Activated CD4-positive, alpha-beta memory T cell treated with anti-CD3 and anti-CD28 coated beads for 36 hours (primary cell): ENCODE measurements at regions of chr2 and their contacts with region 1.

Region 1: DNA sequence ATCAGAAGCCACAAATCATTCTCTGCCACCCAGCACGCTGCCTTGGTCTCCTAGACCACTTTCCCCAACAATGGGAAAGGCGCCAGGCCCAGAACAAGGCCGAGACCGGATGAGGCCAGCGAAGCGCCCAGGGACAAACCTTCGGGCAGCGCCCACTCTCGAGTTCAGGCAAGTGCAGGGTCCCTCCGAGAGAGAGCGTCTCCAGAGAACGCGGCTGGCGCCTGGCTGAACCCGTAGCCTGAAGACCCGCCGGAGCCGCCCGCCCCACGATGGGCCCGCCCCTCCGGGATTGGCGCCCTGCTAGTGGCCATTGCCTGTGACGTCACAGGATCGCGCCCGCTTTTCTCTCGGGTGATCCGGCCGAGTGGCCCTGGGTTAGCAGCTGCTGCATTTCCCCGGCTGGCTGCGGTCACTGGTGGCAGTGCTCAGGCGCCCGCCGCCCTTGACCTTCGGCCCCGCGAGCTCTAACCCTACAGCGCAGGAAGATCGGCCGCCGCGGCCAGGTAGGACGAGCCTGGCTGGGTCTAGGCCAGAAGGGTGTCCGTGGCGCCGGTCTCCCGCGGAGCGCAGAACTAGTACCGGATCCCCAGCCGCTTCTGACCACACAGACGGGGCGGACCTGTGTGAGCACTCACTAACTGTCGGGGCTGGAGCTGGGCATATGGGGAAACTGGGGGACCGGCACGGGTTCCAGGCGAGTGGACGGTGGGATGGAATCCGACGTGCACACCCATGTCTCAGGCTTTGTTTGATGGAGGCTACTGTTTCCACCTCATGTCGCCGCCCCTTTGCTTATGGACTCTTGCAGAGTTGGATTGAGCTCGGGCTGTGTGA is at the start of gene FAHD2A:
- DNase-seq: peak; percentile 97
- H3K4me3 Mint-ChIP-seq: peak within 1 kb of the TSS; percentile 91
- H3K27ac Mint-ChIP-seq: peak within 1 kb of the TSS; percentile 68
- H3K4me1 Mint-ChIP-seq: peaks cover 17% of the 10 kb centered on the region
- H3K27me3 Mint-ChIP-seq: no peaks in the 10 kb centered on the region
- total RNA-seq, gene FAHD2A: 42.8 to 43.9 TPM

Region 2: DNA sequence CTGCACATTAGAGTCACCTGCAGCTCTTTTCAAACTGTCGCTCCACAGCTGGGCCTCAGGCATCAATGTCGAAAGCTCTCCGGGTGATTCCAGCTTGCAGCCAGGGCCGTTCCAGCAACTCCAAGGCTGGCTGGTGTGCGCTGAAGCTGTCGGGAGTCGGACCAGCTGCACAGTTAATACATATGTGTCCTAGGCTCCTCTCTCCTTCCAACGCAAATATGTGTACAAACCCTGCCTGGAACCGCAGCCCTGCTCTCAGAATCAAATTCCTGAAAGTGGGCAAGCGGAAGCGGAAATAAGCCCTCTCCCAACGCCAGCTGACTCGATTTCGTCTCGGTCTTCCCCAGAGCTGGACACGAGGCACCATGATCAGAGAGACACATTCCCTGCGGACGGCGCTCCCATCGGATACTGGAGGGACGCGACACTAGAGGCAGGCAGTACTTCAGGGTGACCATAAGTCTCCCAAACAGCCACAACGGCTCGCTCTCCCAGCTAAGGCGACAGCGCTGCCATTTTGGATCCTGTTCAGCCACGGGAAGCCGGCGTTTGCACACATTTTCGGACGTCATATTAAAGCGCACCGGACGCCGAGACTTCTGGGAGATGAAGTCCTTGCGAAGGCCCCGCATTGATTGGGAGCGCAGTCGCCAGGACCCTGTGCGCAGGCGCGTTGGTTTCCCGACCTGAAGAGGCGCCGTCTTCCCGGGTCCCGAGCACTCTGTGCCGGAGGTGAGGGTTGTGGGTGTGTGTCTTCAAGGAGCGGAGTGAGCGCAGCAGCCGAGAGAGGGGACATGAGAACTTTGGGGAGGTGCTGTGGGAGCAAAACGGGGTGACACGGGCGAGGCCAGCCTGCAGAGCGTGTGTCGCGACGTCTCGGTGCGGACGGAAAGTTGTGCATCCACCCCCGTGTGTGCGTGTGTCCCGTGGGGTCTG is 237.2 kb before region 1 on chr2 and contains the start of gene ZNF2:
- CTCF ChIA-PET with region 1: no interaction called
- POLR2A ChIA-PET with region 1: interaction called, 3 read pairs
- intact Hi-C with region 1: loop called (anchors 2 kb)
- DNase-seq: peak; percentile 98
- H3K4me3 Mint-ChIP-seq: peak within 1 kb of the TSS; percentile 100
- H3K27ac Mint-ChIP-seq: peak within 1 kb of the TSS; percentile 93
- H3K4me1 Mint-ChIP-seq: peaks cover 34% of the 10 kb centered on the region
- H3K27me3 Mint-ChIP-seq: no peaks in the 10 kb centered on the region
- total RNA-seq, gene ZNF2: 3.9 to 4.4 TPM

Region 3: DNA sequence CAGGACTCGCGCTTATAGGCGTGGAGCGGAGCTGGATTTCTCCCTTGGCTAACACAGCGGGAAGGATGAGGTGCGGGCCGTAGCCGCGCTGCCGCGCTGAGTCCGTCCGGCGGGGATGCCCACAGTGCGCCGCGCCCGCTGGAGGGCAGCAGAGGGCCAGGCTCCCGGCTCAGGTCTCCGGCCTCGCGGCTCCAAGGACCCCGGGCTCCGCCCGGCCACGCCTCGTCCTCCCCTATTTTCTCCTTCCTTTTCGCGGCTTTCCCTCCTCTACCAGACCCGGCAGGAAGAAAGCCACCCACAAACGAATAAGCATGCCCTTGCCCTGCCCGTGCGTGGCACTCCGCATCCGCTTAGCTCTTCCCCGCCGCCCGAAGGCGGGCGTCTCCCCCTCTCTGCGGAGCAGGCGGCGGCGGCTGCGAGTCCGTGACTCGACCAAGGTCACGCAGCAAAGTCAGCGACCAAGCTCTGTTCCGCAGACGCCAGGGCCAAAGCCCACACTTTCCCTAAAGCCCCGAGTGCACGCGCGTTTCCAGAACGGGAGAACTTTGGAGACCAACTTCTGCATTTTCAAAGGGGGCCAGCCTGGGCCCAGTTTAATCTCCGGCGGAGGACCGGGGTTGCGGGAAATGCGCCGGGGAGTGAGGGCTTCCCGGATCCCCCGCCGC is 56.9 kb before region 1 on chr2:
- CTCF ChIA-PET with region 1: interaction called, 13 read pairs
- POLR2A ChIA-PET with region 1: no interaction called
- intact Hi-C with region 1: no loop called
- DNase-seq: peak; percentile 74
- H3K4me3 Mint-ChIP-seq: peak overlapping the region; percentile 75
- H3K27ac Mint-ChIP-seq: no peak overlapping the region
- H3K4me1 Mint-ChIP-seq: no peaks in the 10 kb centered on the region
- H3K27me3 Mint-ChIP-seq: peaks cover 43% of the 10 kb centered on the region

Region 4: GRCh38 chr2:95389245-95390119 is 13.1 kb before region 1 on chr2:
- CTCF ChIA-PET with region 1: interaction called, 22 read pairs
- POLR2A ChIA-PET with region 1: no interaction called
- intact Hi-C with region 1: no loop called
- DNase-seq: peak; percentile 64
- H3K4me3 Mint-ChIP-seq: no peak overlapping the region
- H3K27ac Mint-ChIP-seq: no peak overlapping the region
- H3K4me1 Mint-ChIP-seq: no peaks in the 10 kb centered on the region
- H3K27me3 Mint-ChIP-seq: no peaks in the 10 kb centered on the region

Region 5: GRCh38 chr2:95709831-95710230 is 307.2 kb after region 1 on chr2:
- CTCF ChIA-PET with region 1: no interaction called
- POLR2A ChIA-PET with region 1: no interaction called
- intact Hi-C with region 1: no loop called
- DNase-seq: no peak
- H3K4me3 Mint-ChIP-seq: no peak overlapping the region
- H3K27ac Mint-ChIP-seq: no peak overlapping the region
- H3K4me1 Mint-ChIP-seq: no peaks in the 10 kb centered on the region
- H3K27me3 Mint-ChIP-seq: peaks cover 6% of the 10 kb centered on the region

Region 6: DNA sequence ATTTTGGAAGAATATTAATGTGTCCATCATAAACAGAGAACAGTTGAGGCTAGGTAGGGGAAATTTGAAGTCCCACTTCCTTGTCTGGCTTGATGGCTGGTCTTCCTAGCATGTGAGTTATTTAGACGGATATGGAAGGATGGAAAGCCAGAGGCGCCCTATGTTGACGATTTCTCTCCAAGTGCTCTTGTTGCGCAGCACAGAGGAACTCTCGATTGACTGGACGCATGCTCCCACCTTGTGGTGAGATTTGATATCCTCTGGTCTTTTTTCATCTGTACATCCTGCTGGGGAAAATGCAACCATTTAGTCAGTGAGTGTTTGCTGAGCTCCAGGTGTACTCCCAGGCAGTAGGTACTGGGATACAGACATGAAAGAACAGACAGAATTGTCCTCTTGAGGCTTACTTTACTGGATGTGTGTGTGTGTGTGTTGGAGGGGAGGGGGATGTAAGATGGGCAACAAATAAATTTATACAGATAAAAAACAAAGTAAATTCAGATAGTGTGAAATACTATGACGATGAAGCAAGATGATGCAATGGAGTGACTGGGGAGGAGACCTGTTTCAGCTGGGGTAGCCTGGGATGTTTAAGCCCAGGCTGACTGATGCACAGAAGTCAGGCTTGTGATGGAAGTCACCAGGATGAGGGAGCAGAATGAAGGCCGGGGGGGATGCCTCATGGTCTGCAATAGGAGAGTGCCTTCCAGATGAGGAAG is 326.4 kb after region 1 on chr2:
- CTCF ChIA-PET with region 1: no interaction called
- POLR2A ChIA-PET with region 1: no interaction called
- intact Hi-C with region 1: loop called (anchors 2 kb)
- DNase-seq: peak; percentile 55
- H3K4me3 Mint-ChIP-seq: no peak overlapping the region
- H3K27ac Mint-ChIP-seq: no peak overlapping the region
- H3K4me1 Mint-ChIP-seq: no peaks in the 10 kb centered on the region
- H3K27me3 Mint-ChIP-seq: peaks cover 5% of the 10 kb centered on the region